ENCODE measurements at regions of chr5 and their contacts with region 1.

Region 1: GRCh38 chr5:73312146-73312871 is 136.3 kb downstream of the FOXD1 start:
- DNase-seq: no peak

Region 2: GRCh38 chr5:73454351-73455036 is 142.2 kb after region 1 on chr5:
- intact Hi-C with region 1: loop called in 1 of 2 experiments (anchors 5 kb)
- DNase-seq: no peak